ENCODE measurements at regions of chr21 and their contacts with region 1.

Region 1: GRCh38 chr21:41345934-41346685 is 15.7 kb upstream of the MX2 start:
- DNase-seq: no peak
- H3K4me3 ChIP-seq: no peak overlapping the region
- H3K27ac ChIP-seq: no peak overlapping the region
- H3K4me1 ChIP-seq: no peaks in the 10 kb centered on the region
- H3K27me3 ChIP-seq: no peaks in the 10 kb centered on the region; the same call in 1 of the 2 replicates
- CTCF ChIP-seq: no peak

Region 2: DNA sequence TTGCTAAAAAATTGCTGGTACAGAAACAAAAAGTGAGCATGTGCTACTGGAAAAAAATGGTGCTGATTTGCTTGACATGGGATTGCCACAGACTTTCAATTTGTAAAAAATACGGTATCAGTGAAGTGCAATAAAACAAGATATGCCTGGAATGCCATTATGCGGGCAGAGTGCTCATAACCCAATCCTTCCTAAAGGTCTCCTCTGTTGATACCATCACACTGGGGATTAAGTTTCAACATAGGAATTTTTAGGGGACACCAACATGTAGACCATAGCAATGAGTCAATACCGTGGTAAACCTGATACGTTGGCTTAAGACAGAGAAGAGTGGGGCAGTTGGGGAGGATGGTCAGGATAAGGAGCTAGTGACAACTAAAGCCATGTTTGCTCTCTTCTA is 100.5 kb after region 1 on chr21:
- CTCF ChIA-PET with region 1: no interaction called
- POLR2A ChIA-PET with region 1: interaction called, 27 read pairs
- intact Hi-C with region 1: no loop called
- DNase-seq: peak in 1 of 2 experiments; percentile 74
- H3K4me3 ChIP-seq: no peak overlapping the region
- H3K27ac ChIP-seq: no peak overlapping the region
- H3K4me1 ChIP-seq: no peaks in the 10 kb centered on the region
- H3K27me3 ChIP-seq: no peaks in the 10 kb centered on the region
- CTCF ChIP-seq: no peak

Region 3: DNA sequence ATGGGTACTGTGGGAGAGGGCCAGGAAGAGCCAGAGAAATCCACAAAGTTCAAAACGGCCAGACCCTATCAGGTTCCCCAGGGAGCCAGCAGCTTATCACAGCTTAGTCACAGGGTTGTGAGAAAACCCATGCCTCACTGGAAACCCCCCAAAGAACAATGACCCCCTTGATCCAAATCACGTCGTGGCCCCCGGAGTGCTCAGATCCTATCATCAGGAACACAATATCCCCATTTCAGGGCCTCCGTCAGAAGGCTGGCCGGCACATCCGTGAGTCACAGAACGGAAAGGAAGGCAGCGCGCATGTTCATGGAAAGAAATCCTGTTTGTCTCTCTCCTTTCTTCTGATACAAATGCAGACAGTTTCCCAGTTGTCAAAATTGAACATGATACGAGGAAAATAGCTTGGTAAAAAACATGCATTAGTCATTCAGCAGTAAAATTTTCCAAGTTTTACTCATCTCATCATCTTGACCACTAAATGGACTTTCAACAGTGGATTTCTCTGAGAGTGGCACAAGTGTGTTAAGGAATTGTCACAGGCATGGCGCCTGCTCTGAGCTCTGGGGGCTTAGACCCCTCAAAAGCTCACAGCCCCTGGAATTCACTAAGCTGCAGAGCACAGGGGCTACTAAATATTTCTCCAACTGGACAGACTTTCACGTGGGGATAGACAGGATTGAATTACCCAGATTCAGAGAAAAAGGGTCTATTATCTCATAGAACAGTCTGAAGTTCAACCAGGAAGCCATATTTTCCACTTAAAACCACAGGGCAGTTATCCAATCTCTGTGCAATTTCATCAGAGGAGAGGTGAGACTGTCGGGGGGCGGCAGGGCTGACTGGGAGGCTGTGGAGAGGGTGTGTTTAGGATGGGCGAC is 296.0 kb after region 1 on chr21:
- CTCF ChIA-PET with region 1: no interaction called
- POLR2A ChIA-PET with region 1: no interaction called
- intact Hi-C with region 1: no loop called
- DNase-seq: peak; percentile 58 to 93
- H3K4me3 ChIP-seq: peak overlapping the region; percentile 44; the same call in 1 of the 2 replicates
- H3K27ac ChIP-seq: peak overlapping the region; percentile 100
- H3K4me1 ChIP-seq: peaks cover 75% of the 10 kb centered on the region
- H3K27me3 ChIP-seq: no peaks in the 10 kb centered on the region
- CTCF ChIP-seq: no peak

Measured in PC-9 (cell line).